ENCODE measurements at regions of chr10 and their contacts with region 1.

Region 1: DNA sequence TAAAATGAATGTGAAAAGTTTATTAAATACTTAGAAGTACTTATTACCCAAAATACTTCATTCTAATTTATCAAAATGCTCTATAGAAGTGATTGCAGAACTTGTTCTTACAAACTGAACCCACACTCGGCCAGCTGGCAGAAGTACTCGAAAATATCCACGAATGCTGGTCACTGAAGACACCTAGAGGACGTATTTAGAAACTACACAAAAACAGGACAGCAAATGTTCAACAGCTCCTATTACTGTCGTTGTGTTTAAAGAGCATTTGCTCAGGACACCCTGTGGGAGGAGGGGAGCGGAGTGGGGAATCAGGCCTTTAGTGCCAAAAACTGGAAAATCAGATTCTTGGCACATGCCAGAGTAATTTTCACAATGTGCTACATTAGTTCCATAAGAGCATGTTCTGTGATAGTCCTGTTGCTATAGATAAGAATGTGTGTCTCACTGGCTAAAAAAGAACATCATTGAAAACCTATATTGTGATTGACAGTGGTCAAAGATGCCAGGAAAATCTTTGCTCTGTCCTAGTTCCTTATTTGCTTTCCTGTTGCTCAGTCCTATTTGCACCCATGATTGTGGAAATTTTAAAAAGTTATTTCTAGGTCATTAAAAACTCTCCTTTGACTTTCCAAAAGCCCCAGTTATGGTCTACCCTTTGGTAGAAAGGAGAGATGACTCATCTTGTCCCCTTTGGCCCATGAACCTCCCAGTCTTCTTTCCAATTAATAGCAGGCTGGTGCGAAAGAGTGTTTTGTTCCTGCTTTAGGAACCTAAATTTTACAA is 49.0 kb upstream of the NRBF2 start:
- DNase-seq: no peak
- H3K4me3 ChIP-seq: no peak overlapping the region
- H3K27ac ChIP-seq: no peak overlapping the region
- H3K4me1 ChIP-seq: peaks cover 2 to 11% (median 7%) of the 10 kb centered on the region in 4 donors
- H3K27me3 ChIP-seq: peaks cover 0 to 4% (median 0%) of the 10 kb centered on the region in 4 donors
- CTCF ChIP-seq: peak; percentile 62 to 73 (median 72)
- EP300 ChIP-seq: no peak
- POLR2A ChIP-seq: no peak

Region 2: GRCh38 chr10:62816331-62817120 is 267.6 kb before region 1 on chr10 and contains the start of gene EGR2:
- intact Hi-C with region 1: loop called (anchors 5 kb)
- DNase-seq: peak; percentile 99
- H3K4me3 ChIP-seq: peak within 1 kb of the TSS; percentile 67 to 100 (median 76)
- H3K27ac ChIP-seq: peak within 1 kb of the TSS; percentile 83 to 93 (median 85)
- H3K4me1 ChIP-seq: peaks cover 32 to 46% (median 42%) of the 10 kb centered on the region in 4 donors
- H3K27me3 ChIP-seq: peaks cover 0 to 48% (median 16%) of the 10 kb centered on the region in 4 donors
- CTCF ChIP-seq: no peak
- EP300 ChIP-seq: no peak
- POLR2A ChIP-seq: no peak
- total RNA-seq, gene EGR2: 0.26 to 4.0 (median 1.5) TPM

Region 3: DNA sequence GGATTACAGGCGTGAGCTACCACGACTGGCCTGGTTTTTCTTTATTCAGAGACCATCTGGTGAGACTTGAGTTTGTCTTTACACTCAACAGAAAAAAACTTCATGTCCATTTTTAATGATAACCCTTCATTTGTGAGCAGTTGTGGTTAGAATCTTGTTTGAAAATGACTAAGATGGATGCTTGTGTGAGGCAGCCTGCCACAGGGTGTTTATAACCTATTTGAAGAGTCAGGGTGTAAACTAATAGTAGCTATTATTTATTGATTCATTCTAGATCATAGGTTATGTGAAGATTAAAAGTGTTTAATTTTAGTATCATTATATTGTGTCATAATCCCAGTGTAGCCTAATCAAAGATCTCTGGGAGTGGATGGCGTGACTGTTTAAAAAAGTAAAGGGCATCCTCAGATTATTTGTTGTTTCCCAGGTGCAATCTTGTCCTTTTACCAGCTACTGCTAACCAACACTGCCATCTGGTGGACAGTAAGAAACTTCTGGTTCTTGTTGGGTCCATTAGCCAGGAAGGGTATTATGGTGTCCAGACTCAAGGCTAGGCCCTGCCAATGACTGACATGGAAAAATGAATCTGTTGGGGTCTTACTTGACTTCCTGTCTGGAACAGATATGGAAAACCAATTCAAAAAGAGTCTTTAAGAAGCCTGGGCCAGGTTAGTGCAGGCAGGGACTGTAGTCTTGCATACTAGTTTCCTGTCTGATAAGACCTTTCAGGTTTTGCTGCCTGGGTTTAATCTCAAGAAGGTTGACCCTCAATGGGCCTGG is 73.9 kb after region 1 on chr10:
- intact Hi-C with region 1: loop called (anchors 10 kb)
- DNase-seq: peak; percentile 3
- H3K4me3 ChIP-seq: no peak overlapping the region
- H3K27ac ChIP-seq: no peak overlapping the region
- H3K4me1 ChIP-seq: peaks cover 0 to 33% (median 25%) of the 10 kb centered on the region in 4 donors
- H3K27me3 ChIP-seq: no peaks in the 10 kb centered on the region
- CTCF ChIP-seq: peak; percentile 72 to 80 (median 74)
- EP300 ChIP-seq: no peak
- POLR2A ChIP-seq: no peak

Region 4: DNA sequence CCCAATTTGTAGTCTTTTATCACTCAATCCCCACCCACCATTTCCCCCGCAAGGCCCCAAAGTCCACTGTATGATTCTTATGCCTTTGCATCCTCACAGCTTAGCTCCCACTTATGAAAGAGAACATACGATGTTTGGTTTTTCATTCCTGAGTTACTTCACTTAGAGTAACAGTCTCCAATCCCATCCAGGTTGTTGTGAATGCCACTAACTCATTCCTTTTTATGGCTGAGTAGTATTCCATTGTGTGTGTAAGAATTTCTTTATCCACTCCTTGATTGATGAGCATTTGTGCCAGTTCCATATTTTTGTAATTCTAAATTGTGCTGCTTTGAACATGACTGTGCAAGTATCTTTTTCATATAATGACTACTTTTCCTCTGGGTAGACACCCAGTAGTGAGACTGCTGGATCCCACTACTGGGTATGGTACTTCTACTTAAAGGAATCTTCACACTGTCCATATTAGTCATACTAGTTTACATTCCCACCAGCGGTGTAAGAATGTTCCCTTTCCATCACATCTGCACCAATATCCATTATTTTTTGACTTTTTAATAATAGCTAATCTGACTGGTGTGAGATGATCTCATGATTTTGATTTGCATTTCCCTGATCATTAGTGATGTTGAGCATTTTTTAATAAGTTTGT is 229.1 kb after region 1 on chr10:
- intact Hi-C with region 1: no loop called
- DNase-seq: no peak
- H3K4me3 ChIP-seq: no peak overlapping the region
- H3K27ac ChIP-seq: no peak overlapping the region
- H3K4me1 ChIP-seq: peaks cover 8 to 16% (median 12%) of the 10 kb centered on the region in 4 donors
- H3K27me3 ChIP-seq: no peaks in the 10 kb centered on the region
- CTCF ChIP-seq: no peak
- EP300 ChIP-seq: no peak
- POLR2A ChIP-seq: no peak

Measured in esophagus muscularis mucosa (tissue), 4 donors.